ENCODE measurements at regions of chr13 and their contacts with region 1.

Region 1: DNA sequence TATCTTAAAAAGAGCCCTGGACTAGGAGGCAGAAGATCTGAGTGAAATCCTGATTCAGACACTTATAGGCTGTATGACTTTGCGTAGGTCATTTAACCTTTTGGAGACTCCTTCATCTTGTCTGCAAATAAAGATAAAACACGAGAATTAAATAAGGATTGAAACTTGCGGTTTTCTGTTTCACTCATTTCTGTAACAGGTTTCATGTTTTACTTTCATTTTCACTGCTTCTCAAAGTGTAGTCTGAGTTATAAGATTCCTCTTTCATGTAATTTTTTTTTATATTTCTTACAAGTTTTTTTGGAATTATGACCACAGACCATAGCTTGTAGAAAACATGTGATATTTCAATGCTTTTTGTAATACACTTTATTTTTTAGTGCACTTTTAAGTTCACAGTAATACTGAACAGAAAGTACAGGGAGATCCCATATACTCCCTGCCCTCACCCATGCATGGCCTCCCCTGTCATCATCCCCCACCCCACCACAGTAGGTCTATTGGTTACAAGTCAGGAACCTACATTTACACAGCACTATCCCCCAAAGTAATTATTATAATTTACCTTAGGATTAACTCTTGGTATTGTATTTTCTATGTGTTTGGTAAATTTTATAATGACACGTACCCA is 174.6 kb downstream of the ITGBL1 start:
- DNase-seq: peak; percentile 13
- H3K4me3 Mint-ChIP-seq: no peak overlapping the region
- H3K27ac Mint-ChIP-seq: peak overlapping the region; percentile 66
- H3K4me1 Mint-ChIP-seq: peaks cover 36% of the 10 kb centered on the region
- H3K27me3 Mint-ChIP-seq: peaks cover 34% of the 10 kb centered on the region

Region 2: DNA sequence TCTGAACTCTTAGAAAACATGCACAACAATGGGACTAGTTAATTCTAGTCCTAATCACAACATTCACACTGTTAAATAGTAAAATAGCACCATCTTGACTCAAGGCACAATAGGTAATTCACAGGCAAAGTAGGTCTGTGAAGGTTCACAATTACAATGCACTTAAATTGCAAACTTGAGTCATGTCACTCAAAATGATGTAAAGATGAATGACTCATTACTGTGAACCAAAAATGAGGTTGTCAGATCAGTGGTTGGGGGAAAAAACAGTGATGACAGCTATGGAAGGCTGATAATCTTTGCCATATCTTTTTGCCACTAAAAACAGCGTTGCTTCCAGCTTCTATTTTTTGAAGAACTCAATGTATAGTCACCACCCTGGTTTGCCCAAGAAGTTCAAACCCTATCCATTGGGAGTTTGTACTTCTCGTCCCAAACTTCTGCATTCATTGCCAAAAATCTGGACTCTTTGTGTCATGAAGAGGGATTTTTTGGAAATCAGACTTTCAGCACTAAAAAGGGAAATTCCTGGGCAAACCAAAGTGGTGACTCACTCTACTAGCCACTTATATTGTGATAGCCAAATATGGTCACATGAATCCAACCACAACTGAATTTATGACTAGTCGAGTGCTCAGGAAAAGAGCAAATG is 751.5 kb before region 1 on chr13:
- intact Hi-C with region 1: loop called (anchors 2 kb)
- DNase-seq: no peak
- H3K4me3 Mint-ChIP-seq: no peak overlapping the region
- H3K27ac Mint-ChIP-seq: peak overlapping the region; percentile 72
- H3K4me1 Mint-ChIP-seq: peaks cover 17% of the 10 kb centered on the region
- H3K27me3 Mint-ChIP-seq: peaks cover 13% of the 10 kb centered on the region

Region 3: GRCh38 chr13:101520672-101521071 is 106.4 kb before region 1 on chr13:
- intact Hi-C with region 1: loop called (anchors 2 kb)
- DNase-seq: peak; percentile 15
- H3K4me3 Mint-ChIP-seq: no peak overlapping the region
- H3K27ac Mint-ChIP-seq: no peak overlapping the region
- H3K4me1 Mint-ChIP-seq: peaks cover 17% of the 10 kb centered on the region
- H3K27me3 Mint-ChIP-seq: peaks cover 12% of the 10 kb centered on the region

Region 4: GRCh38 chr13:101611491-101612475 is 15.3 kb before region 1 on chr13:
- intact Hi-C with region 1: loop called (anchors 2 kb)
- DNase-seq: no peak
- H3K4me3 Mint-ChIP-seq: no peak overlapping the region
- H3K27ac Mint-ChIP-seq: no peak overlapping the region
- H3K4me1 Mint-ChIP-seq: no peaks in the 10 kb centered on the region
- H3K27me3 Mint-ChIP-seq: no peaks in the 10 kb centered on the region

Region 5: GRCh38 chr13:102773441-102774215 is 1146.6 kb after region 1 on chr13 and contains the start of gene TEX30:
- intact Hi-C with region 1: loop called (anchors 10 kb)
- DNase-seq: peak; percentile 86
- H3K4me3 Mint-ChIP-seq: peak within 1 kb of the TSS; percentile 95
- H3K27ac Mint-ChIP-seq: peak within 1 kb of the TSS; percentile 93
- H3K4me1 Mint-ChIP-seq: peaks cover 53% of the 10 kb centered on the region
- H3K27me3 Mint-ChIP-seq: no peaks in the 10 kb centered on the region
- total RNA-seq, gene TEX30: 54.8 and 58.9 TPM in 2 replicates

Measured in activated T-helper 2 cell treated with anti-CD3 and anti-CD28 coated beads, Interferon-gamma antibody, Interleukin-2, Interleukin-4, amounts not matched to agents 10 μg/mL and 5 μg/mL and 100 μg/mL, durations not matched to agents 14 hours and 24 hours and 36 hours (primary cell).